ENCODE measurements at regions of chr3 and their contacts with region 1.

Region 1: DNA sequence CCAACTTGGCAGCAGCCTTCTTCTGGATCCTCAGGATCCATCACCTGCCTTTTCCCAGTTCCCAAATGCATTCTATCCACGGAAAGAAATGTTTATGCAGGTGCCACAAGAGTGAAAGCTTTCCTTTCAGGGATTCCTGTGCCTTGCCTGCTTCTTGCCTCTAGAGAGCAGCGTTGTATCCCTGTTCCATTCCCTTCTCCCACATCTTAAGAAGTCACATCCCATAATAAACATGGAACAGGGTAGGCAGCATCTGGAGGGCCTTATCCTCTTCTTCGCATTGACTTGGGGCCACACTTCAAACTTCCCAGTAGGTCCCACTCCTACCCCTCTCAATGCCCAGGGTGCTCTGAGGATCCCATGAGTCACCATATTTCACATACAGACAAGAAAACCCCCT is 72.7 kb upstream of the DCLK3 start:
- DNase-seq: no peak
- H3K4me3 ChIP-seq: no peak overlapping the region
- H3K27ac ChIP-seq: no peak overlapping the region
- H3K4me1 ChIP-seq: no peaks in the 10 kb centered on the region
- H3K27me3 ChIP-seq: no peaks in the 10 kb centered on the region
- CTCF ChIP-seq: peak in 2 of 3 experiments; percentile 73 to 81; a peak in 3 of 4 replicates
- EP300 ChIP-seq: no peak
- POLR2A ChIP-seq: no peak
- RAD21 ChIP-seq: peak; percentile 73 to 78

Region 2: DNA sequence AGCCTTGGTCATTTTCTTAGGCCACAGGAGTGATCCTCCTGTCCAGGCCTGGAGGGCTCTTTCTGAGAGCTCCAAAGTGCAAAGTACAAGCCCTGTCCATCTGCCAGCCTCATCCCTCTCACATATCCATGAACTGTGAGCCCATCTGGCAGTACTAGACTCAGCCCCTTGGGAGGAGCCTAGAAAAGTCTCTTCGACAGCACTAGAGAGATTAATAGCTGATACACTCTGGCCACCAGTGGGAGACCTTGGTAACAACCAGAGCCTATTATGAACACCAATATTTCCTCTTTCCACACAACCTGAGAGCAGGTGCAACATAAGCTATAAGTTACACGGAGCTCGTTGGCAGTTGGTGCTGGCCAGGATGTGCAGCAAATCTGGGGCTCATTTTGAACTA is 13.3 kb before region 1 on chr3:
- CTCF ChIA-PET with region 1: interaction called, 35 read pairs
- POLR2A ChIA-PET with region 1: no interaction called
- DNase-seq: no peak
- H3K4me3 ChIP-seq: no peak overlapping the region
- H3K27ac ChIP-seq: no peak overlapping the region
- H3K4me1 ChIP-seq: peaks cover 0 to 4% (median 1%) of the 10 kb centered on the region in 4 experiments; a peak in 3 of 7 replicates
- H3K27me3 ChIP-seq: no peaks in the 10 kb centered on the region
- CTCF ChIP-seq: no peak
- EP300 ChIP-seq: no peak
- POLR2A ChIP-seq: no peak
- RAD21 ChIP-seq: no peak

Region 3: DNA sequence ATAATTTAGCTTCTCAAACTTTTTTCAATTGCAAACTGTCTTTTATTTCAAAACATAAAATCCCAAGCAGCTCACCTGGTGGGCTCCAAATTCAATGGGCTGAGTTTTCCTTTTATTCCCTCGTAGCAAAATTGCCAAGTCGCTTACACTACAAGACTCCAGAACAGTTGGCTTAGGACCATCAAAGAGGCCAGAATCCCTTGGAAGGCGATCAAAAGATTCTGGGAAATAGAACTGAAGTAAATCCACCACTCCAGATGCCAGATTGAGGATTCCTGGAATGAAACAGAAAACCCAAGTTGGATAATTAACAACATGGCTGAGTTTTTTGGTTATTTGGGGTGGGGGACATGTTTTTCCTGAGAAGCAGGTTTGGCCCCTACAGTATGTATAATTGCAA is 15.0 kb after region 1 on chr3:
- CTCF ChIA-PET with region 1: interaction called, 26 read pairs
- POLR2A ChIA-PET with region 1: no interaction called
- DNase-seq: no peak
- H3K4me3 ChIP-seq: no peak overlapping the region
- H3K27ac ChIP-seq: no peak overlapping the region
- H3K4me1 ChIP-seq: no peaks in the 10 kb centered on the region
- H3K27me3 ChIP-seq: no peaks in the 10 kb centered on the region
- CTCF ChIP-seq: no peak
- EP300 ChIP-seq: no peak
- POLR2A ChIP-seq: no peak
- RAD21 ChIP-seq: no peak